Mammary epithelial cell (primary cell): ENCODE measurements at regions of chr2 and their contacts with region 1.

Region 1: DNA sequence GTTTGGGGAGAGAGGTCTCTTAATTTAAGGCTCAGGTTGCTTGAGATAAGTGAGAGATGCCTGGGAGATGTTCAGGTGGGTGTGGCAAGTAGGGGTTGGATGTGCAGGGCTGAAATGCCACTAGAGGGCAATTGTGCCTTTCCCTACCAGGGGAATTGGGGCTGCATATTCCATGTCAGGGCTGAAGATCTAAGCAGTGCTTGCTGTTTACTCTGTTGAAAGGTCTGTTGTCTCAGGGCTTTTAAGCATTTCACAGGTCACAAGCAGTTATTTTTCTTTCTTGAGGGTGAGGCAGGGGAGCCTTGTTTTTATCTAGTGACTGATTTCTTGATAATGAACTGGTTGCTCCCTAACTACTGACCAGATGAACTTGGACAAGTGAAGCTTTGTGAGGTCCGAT is 7.9 kb downstream of the CCDC85A start:
- DNase-seq: peak; percentile 46
- H3K4me3 ChIP-seq: no peak overlapping the region
- H3K27ac ChIP-seq: no peak overlapping the region
- H3K4me1 ChIP-seq: no peaks in the 10 kb centered on the region
- H3K27me3 ChIP-seq: no peaks in the 10 kb centered on the region
- CTCF ChIP-seq: peak; percentile 70 to 91

Region 2: DNA sequence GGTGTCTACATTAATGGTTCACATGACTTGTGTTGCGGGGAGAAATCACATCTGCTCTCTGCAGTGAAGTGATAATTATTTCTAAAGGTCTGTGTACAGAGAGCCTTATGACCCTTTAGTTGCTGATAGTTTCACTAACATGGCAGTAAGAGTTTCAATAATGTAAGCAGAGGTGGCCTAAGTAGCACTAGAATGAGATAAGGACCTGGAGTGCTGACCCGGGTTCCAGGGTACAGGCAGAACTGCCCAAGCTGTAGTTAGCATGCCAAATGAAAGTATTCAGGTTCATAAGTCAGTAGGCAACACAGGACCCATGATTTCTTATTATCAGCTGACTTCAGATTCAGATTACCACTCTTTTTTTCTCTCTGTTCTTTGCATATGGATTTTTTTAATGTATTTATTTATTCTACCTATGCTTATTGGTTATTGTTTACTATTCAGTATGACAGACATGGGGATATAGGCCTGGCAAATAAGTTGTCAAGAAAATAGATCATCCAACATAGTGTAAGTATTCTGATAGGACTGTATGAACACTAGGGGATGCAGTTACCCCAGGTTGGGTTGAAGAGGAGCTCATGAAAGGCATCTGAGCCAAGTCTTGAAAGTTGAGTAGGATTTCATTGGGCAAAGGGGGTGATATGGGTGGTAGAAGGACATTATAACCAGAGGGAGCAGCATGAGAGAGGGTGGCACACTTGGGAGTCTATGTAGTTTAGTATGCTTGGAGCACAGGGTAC is 97.3 kb after region 1 on chr2:
- CTCF ChIA-PET with region 1: no interaction called
- dilution Hi-C with region 1: no loop called
- in situ Hi-C with region 1: no loop called
- intact Hi-C with region 1: loop called (anchors 5 kb)
- DNase-seq: no peak
- H3K4me3 ChIP-seq: no peak overlapping the region
- H3K27ac ChIP-seq: peak overlapping the region; percentile 5
- H3K4me1 ChIP-seq: peaks cover 18% of the 10 kb centered on the region
- H3K27me3 ChIP-seq: peaks cover 3% of the 10 kb centered on the region
- CTCF ChIP-seq: peak in 1 of 2 donors; percentile 38